ENCODE measurements at regions of chr16 and their contacts with region 1.

Region 1: GRCh38 chr16:58000706-58001676 is at the start of gene USB1:
- DNase-seq: peak; percentile 85 to 92
- H3K4me3 ChIP-seq: peak within 1 kb of the TSS; percentile 63 to 96 (median 84)
- H3K27ac ChIP-seq: no peak within 1 kb of the TSS
- H3K4me1 ChIP-seq: peaks cover 5 to 8% (median 7%) of the 10 kb centered on the region in 4 experiments; a peak in 6 of 7 replicates
- H3K27me3 ChIP-seq: peaks cover 0 to 3% (median 0%) of the 10 kb centered on the region in 4 experiments; a peak in 2 of 7 replicates
- CTCF ChIP-seq: peak; percentile 57 to 71 (median 64)
- EP300 ChIP-seq: no peak
- POLR2A ChIP-seq: peak in 1 of 2 experiments; percentile 72; a peak in 2 of 3 replicates
- RAD21 ChIP-seq: peak; percentile 49 to 66
- total RNA-seq, gene USB1: 65.4 and 72.9 TPM in 2 replicates

Region 2: GRCh38 chr16:57976331-57976796 is 24.6 kb before region 1 on chr16:
- CTCF ChIA-PET with region 1: interaction called, 10 read pairs
- POLR2A ChIA-PET with region 1: no interaction called
- DNase-seq: no peak
- H3K4me3 ChIP-seq: no peak overlapping the region
- H3K27ac ChIP-seq: no peak overlapping the region
- H3K4me1 ChIP-seq: no peaks in the 10 kb centered on the region; a peak in 1 of 7 replicates
- H3K27me3 ChIP-seq: no peaks in the 10 kb centered on the region
- CTCF ChIP-seq: no peak
- EP300 ChIP-seq: no peak
- POLR2A ChIP-seq: no peak
- RAD21 ChIP-seq: no peak